Activated CD4-positive, alpha-beta memory T cell treated with anti-CD3 and anti-CD28 coated beads for 36 hours (primary cell): ENCODE measurements at regions of chr2 and their contacts with region 1.

Region 1: GRCh38 chr2:205766779-205767359 is 84.6 kb downstream of the NRP2 start:
- DNase-seq: peak; percentile 65
- H3K4me3 Mint-ChIP-seq: no peak overlapping the region
- H3K27ac Mint-ChIP-seq: no peak overlapping the region
- H3K4me1 Mint-ChIP-seq: peaks cover 6% of the 10 kb centered on the region
- H3K27me3 Mint-ChIP-seq: peaks cover 31% of the 10 kb centered on the region

Region 2: DNA sequence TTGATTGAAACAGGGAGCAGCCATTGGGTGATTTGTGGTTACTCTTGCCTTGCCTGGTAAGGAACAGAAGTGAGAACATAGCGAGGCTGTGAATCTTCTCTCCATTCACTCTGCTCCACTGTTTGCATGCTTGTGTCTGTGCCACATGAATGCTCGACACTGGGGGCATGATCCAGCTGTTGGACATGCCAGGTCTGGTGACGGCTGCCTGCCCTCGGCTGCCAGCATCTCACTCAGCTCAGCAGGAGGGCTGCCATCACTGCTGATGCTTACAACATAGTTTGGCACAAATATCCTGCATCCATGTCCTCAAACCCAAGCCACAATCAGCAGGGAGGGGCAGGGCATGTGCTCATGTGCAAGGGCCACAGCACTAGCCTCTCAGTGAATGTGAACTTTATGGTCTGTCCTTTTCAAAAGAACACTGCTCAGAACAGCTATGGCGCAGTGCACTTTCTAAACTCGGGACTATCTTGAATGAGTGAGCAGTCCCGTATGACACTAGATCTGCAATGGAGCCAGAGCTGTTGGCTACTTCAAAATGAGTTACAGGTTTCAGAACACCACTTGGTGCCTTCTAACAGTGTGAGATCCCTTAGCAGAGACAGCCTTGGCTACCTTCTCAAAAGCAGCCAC is 41.7 kb after region 1 on chr2:
- CTCF ChIA-PET with region 1: interaction called, 4 read pairs
- POLR2A ChIA-PET with region 1: no interaction called
- intact Hi-C with region 1: loop called (anchors 2 kb)
- DNase-seq: no peak
- H3K4me3 Mint-ChIP-seq: no peak overlapping the region
- H3K27ac Mint-ChIP-seq: no peak overlapping the region
- H3K4me1 Mint-ChIP-seq: no peaks in the 10 kb centered on the region
- H3K27me3 Mint-ChIP-seq: peaks cover 1% of the 10 kb centered on the region

Region 3: DNA sequence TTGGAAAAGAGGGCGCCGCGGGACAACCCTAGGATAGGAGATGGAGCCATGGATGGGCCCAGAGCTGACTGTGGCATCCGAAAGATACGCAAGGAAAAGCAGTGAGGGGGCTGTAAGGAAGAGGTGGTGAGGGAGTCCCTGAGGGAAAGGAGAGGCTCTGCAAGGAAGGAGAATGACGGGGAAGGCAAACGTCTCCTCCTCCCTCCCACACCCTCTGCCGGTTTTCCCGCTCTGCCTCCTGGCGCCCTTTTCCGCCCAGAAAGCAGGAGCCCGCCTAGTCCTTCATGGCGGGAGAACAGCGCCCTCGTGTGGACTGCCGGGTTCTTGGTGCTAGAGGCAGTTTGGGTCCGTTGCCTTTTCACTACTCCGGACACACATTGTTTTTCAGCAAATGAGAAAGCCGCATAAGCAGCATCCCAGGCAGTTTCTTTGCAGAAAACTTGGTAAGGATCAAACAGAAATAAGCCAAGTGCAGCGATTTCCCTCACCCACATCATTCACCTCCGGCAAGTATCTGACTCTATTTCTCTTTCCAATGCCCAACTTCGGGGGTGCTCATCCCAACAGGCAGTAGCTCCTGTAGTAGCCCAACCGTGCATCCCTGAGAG is 118.7 kb after region 1 on chr2:
- CTCF ChIA-PET with region 1: interaction called, 6 read pairs
- POLR2A ChIA-PET with region 1: no interaction called
- intact Hi-C with region 1: loop called (anchors 1 kb)
- DNase-seq: peak; percentile 81
- H3K4me3 Mint-ChIP-seq: no peak overlapping the region
- H3K27ac Mint-ChIP-seq: no peak overlapping the region
- H3K4me1 Mint-ChIP-seq: no peaks in the 10 kb centered on the region
- H3K27me3 Mint-ChIP-seq: peaks cover 15% of the 10 kb centered on the region

Region 4: GRCh38 chr2:205925373-205926337 is 158.8 kb after region 1 on chr2:
- CTCF ChIA-PET with region 1: interaction called, 8 read pairs
- POLR2A ChIA-PET with region 1: no interaction called
- intact Hi-C with region 1: loop called (anchors 2 kb)
- DNase-seq: peak; percentile 82
- H3K4me3 Mint-ChIP-seq: no peak overlapping the region
- H3K27ac Mint-ChIP-seq: no peak overlapping the region
- H3K4me1 Mint-ChIP-seq: peaks cover 6% of the 10 kb centered on the region
- H3K27me3 Mint-ChIP-seq: peaks cover 44% of the 10 kb centered on the region